Activated CD4-positive, alpha-beta T cell treated with anti-CD3 and anti-CD28 coated beads, Interleukin-2, amount 10 ng/mL, durations not matched to agents 24 days and 14 days (primary cell): ENCODE measurements at regions of chr21 and their contacts with region 1.

Region 1: GRCh38 chr21:42414928-42415769 is 11.4 kb downstream of the UBASH3A start:
- DNase-seq: peak; percentile 96
- H3K4me3 Mint-ChIP-seq: peak overlapping the region; percentile 77
- H3K27ac Mint-ChIP-seq: peak overlapping the region; percentile 99
- H3K4me1 Mint-ChIP-seq: peaks cover 58% of the 10 kb centered on the region
- H3K27me3 Mint-ChIP-seq: no peaks in the 10 kb centered on the region

Region 2: DNA sequence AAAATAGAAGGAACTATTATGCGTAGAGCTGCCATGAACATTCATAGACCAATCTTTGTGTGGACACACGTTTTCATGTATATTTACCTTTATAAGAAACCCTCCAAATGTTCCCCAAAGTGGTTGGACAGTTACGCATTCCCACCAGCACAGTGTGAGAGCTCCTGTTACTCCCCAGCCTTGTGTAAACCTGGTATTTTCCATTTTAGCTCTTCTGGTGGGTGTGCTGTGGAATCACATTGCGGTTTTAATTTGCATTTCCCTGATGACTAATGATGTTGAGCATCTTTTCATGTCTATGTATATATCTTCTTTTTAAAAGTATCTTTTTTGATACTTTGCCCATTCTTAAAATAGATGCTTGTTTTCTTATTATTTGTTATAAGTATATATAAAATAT is 14.6 kb before region 1 on chr21:
- intact Hi-C with region 1: loop called (anchors 2 kb)
- DNase-seq: peak; percentile 76
- H3K4me3 Mint-ChIP-seq: peak overlapping the region; percentile 63
- H3K27ac Mint-ChIP-seq: peak overlapping the region; percentile 74
- H3K4me1 Mint-ChIP-seq: peaks cover 48% of the 10 kb centered on the region
- H3K27me3 Mint-ChIP-seq: no peaks in the 10 kb centered on the region

Region 3: DNA sequence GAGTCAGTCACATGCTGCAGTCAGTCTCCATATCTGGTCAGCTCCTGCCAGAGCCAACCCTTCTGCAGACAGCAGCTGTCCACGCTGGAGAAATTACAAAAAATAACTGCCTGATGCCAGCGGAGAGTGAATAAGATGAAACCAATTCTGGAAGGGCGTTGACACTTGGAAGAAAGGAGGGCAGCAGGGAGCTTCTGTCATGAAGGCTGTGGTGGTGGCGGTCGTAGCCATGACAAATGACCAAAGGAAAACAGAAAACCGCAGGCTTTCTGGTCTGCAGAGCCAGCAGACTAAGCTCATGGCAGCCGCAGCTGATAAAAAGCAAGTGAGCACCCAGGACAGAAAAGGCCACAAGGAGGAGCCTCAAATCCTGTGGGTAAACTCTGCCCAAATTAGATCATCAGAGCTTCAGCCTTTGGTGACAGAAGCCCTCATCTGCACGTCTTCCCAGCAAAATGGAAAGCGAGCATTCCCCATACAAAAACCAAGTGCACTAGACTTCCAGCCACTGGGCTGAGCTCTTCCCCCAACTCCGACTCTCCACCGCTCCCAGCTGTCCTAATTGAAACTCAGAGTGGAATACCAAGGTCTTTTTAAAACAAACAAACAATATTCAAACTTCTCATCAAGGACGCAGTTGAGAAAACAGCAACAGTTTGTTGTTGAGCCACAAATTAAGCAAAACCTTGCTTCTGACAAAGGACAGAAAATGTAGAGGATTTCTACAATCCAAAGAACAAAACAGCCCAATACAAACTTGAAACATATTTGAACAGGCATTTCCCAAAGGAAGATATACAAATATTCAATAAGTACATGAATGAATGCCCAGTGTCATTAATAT is 52.2 kb after region 1 on chr21:
- intact Hi-C with region 1: no loop called
- DNase-seq: peak; percentile 75
- H3K4me3 Mint-ChIP-seq: no peak overlapping the region
- H3K27ac Mint-ChIP-seq: no peak overlapping the region
- H3K4me1 Mint-ChIP-seq: peaks cover 42% of the 10 kb centered on the region
- H3K27me3 Mint-ChIP-seq: peaks cover 5% of the 10 kb centered on the region

Region 4: GRCh38 chr21:42614811-42615659 is 199.9 kb after region 1 on chr21:
- intact Hi-C with region 1: loop called (anchors 5 kb)
- DNase-seq: peak; percentile 87
- H3K4me3 Mint-ChIP-seq: no peak overlapping the region
- H3K27ac Mint-ChIP-seq: no peak overlapping the region
- H3K4me1 Mint-ChIP-seq: peaks cover 7% of the 10 kb centered on the region
- H3K27me3 Mint-ChIP-seq: peaks cover 14% of the 10 kb centered on the region